Right ventricle myocardium inferior (tissue), 1 donor: ENCODE measurements at regions of chr6 and their contacts with region 1.

Region 1: DNA sequence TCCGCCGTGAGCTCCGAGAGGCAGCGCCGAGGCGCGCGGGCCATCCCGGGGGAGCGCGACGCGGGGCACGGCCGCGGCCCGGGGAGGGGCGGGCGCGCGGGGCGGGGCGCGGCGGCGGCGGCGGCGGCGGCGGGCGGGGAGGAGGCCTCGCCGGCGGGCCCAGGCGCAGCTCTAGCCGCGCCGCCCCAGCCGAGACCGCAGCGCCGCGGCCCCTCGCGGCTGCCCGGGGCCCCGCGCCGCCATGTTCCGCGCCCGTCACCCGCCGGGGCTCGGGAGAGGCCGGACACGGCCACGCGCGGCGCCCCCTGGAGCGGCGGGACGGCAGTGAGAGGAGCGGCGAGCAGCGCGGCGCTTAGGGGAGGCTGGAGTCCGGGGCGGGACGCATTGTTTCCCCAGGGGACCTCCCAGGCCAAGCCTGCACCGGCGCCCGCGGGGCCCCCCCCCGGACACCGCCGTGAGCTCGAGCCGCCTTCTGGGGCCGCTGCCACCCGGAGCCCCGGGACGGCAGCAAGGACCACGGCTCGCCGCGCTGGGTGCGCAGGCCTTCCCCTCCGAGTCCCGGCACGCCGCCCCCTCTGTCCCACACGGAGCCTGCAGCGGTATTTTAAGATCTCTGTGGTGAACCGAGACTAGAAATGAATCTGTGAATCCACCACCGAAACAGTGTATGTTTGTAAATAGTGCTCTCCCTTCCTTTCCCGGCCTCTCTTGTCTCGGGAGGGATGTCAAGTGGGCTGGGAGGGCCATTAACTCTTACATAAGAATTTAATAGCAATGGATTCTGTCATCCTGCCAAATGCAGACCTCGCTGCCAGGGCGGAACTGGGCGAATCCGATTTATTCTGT is at the start of gene KIF13A:
- DNase-seq: peak; percentile 85
- ATAC-seq: peak; percentile 75
- total RNA-seq, gene KIF13A: 57.3 TPM

Region 2: DNA sequence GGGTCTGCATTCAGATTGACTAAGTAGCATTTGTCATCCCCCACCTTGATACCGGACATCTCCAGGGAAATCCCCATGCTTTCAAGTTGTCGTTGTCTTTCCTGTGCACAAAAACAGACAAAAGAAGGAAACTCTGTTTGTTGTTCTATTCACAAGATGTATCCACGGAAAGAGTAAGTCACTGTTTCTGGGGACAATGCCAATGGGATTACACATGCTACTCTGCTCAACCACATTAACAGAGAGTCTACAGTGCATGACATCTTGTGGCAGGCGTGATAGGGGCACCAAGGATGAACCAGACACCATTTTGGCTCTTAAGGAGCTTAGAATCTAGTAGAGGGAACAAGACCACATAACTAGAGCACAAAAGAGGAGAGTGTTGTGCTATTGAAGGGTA is 156.7 kb before region 1 on chr6:
- intact Hi-C with region 1: loop called (anchors 10 kb)
- DNase-seq: no peak
- ATAC-seq: no peak

Region 3: DNA sequence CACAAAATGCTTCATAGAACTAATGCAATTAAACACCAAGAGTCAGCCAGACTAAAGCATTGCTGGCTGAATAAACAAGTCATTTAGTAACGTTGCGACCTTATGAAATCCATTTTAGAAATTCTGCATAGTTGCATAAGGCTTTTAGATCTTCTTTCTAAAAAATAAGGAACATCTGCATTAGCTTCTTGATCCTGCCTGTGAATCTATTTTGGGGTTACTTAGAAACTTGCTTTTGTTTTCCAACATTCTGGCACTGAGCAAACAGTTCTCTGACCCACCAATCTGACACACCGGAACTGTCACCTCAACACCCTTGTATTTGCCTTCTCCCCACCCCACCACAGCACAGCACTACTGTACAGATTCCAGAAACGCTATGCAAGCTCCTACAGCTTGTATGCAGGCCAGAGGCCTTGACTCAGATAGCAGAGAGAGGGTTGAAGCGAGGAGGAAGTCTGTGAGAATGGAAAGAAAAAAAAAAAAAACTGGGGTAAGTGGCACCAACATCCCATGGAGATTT is 55.4 kb before region 1 on chr6:
- intact Hi-C with region 1: loop called (anchors 2 kb)
- DNase-seq: peak; percentile 64
- ATAC-seq: peak; percentile 95